HepG2 (cell line): ENCODE measurements at regions of chr4 and their contacts with region 1.

Region 1: DNA sequence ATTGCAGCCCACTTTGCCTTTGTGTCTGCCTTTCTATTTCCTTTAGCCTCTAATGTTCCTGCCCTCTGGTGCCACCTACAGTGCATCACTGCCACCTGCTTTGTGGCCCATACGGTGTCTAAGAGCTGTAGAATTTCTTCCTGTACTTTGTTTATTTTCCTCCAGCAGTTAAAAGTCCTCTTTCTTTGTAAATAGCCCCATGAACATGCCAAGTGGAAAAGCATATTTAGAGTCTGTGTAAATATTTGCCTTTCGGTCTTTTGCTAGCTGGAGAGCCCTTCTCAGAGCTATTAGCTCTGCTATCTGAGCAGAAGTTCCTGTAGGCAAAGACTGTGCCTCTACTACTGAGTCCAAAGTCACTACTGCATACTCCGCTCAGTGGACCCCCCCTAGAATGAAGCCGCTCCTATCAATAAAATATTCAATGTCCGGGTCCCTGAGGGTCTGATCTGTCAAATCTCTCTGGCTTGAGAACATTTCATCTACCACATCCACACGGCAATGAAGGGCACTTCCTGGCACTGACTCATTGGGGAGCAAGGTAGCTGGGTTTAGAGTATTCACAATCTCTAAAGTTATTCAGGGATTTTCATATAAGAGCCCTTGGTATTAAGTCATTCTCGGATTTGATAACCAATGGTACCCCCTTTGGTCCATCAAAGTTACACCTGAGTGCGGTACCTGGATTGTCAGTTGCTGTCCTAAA is 36.3 kb downstream of the SULT1E1 start:
- DNase-seq: peak; percentile 98
- ATAC-seq: peak; percentile 98
- H3K4me3 ChIP-seq: 0 out of 6 replicates have a peak overlapping the region, but pooled peaks of 1 of the 3 experiments have one; percentile 4
- H3K27ac ChIP-seq: peak overlapping the region; percentile 80
- H3K4me1 ChIP-seq: peaks cover 60% of the 10 kb centered on the region
- H3K27me3 ChIP-seq: no peaks in the 10 kb centered on the region
- CTCF ChIP-seq: peak; percentile 93
- EP300 ChIP-seq: peak in 1 of 2 experiments; percentile 99; a peak in 3 of 4 replicates
- POLR2A ChIP-seq: no peak
- RAD21 ChIP-seq: peak; percentile 91; the same call in 1 of the 2 replicates

Region 2: DNA sequence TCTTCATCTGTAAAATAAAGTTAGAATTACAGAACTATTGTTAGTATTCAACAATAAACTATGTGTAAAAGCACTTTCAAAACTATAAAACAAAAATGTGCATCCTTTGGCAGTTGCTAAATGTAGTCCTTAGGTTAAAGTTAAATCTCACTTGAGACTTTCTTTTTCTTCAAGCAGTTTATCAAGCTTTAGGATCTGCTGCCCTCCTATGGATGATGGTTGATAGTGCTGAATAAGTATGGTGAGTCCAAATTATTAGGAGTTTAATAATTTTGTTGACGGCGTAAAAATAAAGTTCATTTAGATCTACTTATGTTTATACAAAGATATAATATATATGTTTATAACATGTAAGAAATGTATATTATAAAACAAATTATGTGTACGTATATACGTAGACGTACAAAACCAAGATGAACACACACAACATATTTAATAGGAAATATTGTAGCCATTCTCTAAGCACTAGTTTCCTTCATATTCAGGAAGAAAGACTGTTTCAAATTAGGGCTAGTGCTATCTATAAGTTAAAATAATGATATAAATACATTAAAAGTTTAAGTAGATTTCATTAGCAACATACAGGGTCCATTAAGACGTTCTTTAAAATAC is 206.4 kb before region 1 on chr4:
- CTCF ChIA-PET with region 1: no interaction called
- POLR2A ChIA-PET with region 1: no interaction called
- in situ Hi-C with region 1: no loop called
- intact Hi-C with region 1: loop called (anchors 5 kb)
- DNase-seq: peak; percentile 40
- ATAC-seq: no peak
- H3K4me3 ChIP-seq: no peak overlapping the region
- H3K27ac ChIP-seq: no peak overlapping the region
- H3K4me1 ChIP-seq: no peaks in the 10 kb centered on the region
- H3K27me3 ChIP-seq: no peaks in the 10 kb centered on the region
- CTCF ChIP-seq: peak; percentile 71
- EP300 ChIP-seq: no peak
- POLR2A ChIP-seq: no peak
- RAD21 ChIP-seq: peak; percentile 78

Region 3: GRCh38 chr4:69781458-69782418 is 41.9 kb before region 1 on chr4:
- CTCF ChIA-PET with region 1: no interaction called
- POLR2A ChIA-PET with region 1: interaction called, 7 read pairs
- in situ Hi-C with region 1: no loop called
- intact Hi-C with region 1: loop called (anchors 5 kb)
- DNase-seq: peak; percentile 98
- ATAC-seq: peak; percentile 91
- H3K4me3 ChIP-seq: peak overlapping the region in 1 of 3 experiments; percentile 5; a peak in 2 of 6 replicates
- H3K27ac ChIP-seq: peak overlapping the region; percentile 72
- H3K4me1 ChIP-seq: peaks cover 47% of the 10 kb centered on the region
- H3K27me3 ChIP-seq: no peaks in the 10 kb centered on the region
- CTCF ChIP-seq: peak; percentile 45
- EP300 ChIP-seq: peak in 1 of 2 experiments; percentile 97; a peak in 2 of 4 replicates
- POLR2A ChIP-seq: no peak
- RAD21 ChIP-seq: no peak

Region 4: DNA sequence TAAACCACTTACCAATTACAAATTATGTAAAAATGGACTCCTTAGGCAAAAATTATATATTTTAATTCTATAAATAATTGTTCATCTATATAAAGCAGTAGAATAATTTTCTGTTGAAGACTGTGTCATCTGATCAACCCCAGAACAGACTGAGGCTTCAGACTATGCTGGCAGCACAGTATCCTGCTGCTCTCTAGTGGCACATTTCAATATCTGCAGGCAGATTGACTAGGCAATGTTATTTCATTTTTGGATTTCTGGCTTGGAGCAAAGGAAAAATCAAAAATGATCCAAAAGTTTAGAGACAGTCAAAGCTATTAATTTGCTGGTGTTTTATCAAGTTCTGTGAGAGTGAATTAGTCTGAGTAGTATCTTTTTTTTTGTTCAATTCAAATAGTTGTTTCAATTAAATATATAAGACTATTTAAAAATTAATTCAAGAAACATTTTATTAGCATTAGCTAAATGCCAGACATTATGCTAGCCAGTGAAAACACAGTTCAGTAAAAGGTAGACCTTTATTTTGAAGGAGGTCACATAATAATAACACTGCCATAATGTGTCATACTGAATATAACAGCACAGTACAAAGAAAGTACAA is 57.6 kb after region 1 on chr4:
- CTCF ChIA-PET with region 1: interaction called, 11 read pairs
- POLR2A ChIA-PET with region 1: interaction called, 10 read pairs
- in situ Hi-C with region 1: loop called (anchors 5 kb)
- intact Hi-C with region 1: loop called (anchors 1 kb)
- DNase-seq: peak; percentile 66
- ATAC-seq: peak; percentile 74
- H3K4me3 ChIP-seq: no peak overlapping the region
- H3K27ac ChIP-seq: peak overlapping the region; percentile 17
- H3K4me1 ChIP-seq: peaks cover 53% of the 10 kb centered on the region
- H3K27me3 ChIP-seq: no peaks in the 10 kb centered on the region
- CTCF ChIP-seq: peak; percentile 89
- EP300 ChIP-seq: peak in 1 of 2 experiments; percentile 39; a peak in 2 of 4 replicates
- POLR2A ChIP-seq: no peak
- RAD21 ChIP-seq: peak; percentile 89

Region 5: GRCh38 chr4:70559211-70559830 is 735.7 kb after region 1 on chr4:
- CTCF ChIA-PET with region 1: no interaction called
- POLR2A ChIA-PET with region 1: no interaction called
- in situ Hi-C with region 1: no loop called
- intact Hi-C with region 1: loop called (anchors 1 kb)
- DNase-seq: peak; percentile 67
- ATAC-seq: peak; percentile 74; the same call in 2 of the 3 replicates
- H3K4me3 ChIP-seq: no peak overlapping the region
- H3K27ac ChIP-seq: no peak overlapping the region
- H3K4me1 ChIP-seq: peaks cover 28% of the 10 kb centered on the region
- H3K27me3 ChIP-seq: no peaks in the 10 kb centered on the region
- CTCF ChIP-seq: peak; percentile 81
- EP300 ChIP-seq: no peak
- POLR2A ChIP-seq: no peak
- RAD21 ChIP-seq: peak; percentile 34; the same call in 1 of the 2 replicates